CD14-positive monocyte (primary cell): ENCODE measurements at regions of chr15 and their contacts with region 1.

Region 1: DNA sequence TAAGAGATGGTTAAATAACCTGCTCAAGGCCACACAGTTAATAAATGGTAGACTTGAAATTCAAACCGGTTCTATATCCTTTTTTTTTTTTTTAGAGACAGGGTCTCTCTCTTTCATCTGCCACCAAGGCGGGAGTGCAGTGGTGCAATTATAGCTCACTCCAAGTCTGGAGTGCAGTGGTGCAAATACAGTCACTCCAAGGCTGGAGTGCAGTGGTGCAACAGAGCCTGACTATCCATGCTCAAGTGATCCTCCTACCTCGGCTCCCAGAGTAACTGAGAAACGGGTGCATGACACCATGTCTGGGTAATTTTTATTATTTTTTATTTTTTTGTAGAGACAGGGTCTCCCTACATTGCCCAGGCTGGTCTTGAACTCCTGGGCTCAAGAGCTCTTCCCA is 23.4 kb downstream of the DPP8 start:
- DNase-seq: no peak
- H3K4me3 ChIP-seq: no peak overlapping the region
- H3K4me3 Mint-ChIP-seq: no peak overlapping the region
- H3K27ac ChIP-seq: no peak overlapping the region
- H3K27ac Mint-ChIP-seq: no peak overlapping the region
- H3K4me1 ChIP-seq: no peaks in the 10 kb centered on the region
- H3K4me1 Mint-ChIP-seq: no peaks in the 10 kb centered on the region
- H3K27me3 ChIP-seq: no peaks in the 10 kb centered on the region
- H3K27me3 Mint-ChIP-seq: peaks cover 0 to 2% (median 0%) of the 10 kb centered on the region in 3 donors
- CTCF ChIP-seq: no peak

Region 2: DNA sequence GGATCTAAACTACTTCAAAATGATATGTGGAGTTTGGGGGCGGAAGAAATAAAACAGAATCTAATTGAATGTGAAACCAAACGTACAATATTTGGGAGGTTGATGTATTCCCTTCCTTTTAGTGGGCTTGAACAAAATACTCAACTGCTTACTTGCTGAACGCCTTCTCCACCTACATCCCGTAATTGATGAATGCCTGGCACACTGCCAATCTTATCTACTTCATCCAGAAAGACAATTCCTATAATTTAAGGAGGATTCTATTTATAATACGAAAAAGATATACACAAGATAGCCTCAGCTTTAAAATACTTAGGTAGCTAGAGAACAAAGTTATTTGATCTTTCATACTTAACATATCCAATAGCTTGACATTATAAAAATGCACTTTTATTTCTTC is 337.4 kb before region 1 on chr15:
- intact Hi-C with region 1: loop called in 1 of 2 experiments (anchors 10 kb)
- DNase-seq: no peak
- H3K4me3 ChIP-seq: no peak overlapping the region
- H3K4me3 Mint-ChIP-seq: no peak overlapping the region
- H3K27ac ChIP-seq: no peak overlapping the region
- H3K27ac Mint-ChIP-seq: no peak overlapping the region
- H3K4me1 ChIP-seq: no peaks in the 10 kb centered on the region
- H3K4me1 Mint-ChIP-seq: no peaks in the 10 kb centered on the region
- H3K27me3 ChIP-seq: no peaks in the 10 kb centered on the region
- H3K27me3 Mint-ChIP-seq: no peaks in the 10 kb centered on the region
- CTCF ChIP-seq: no peak

Region 3: DNA sequence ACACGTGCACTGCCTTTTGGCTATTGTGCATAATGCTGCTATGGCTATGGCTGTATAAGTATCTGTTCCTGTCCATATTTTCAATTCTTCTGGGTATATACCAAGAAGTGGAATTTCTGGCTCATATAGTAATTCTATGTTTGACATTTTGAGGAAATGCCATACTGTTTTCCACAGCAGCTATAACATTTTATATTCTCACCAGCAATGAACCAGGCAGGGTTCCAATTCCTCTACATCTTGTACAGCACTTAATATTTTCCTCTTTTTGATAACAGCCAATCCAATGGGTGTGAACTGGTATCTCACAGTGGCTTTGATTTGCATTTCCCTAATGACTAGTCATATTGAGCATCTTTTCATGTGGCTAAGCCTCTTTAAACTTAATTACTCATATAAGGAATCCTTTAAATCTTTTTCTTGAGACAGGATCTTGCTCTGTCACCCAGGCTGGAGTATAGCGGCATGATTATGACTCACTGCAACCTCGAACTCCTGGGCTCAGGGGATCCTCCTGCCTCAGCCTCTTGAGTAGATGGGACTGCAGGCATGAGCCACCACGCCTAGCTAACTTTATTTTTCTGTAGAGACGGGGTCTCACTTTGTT is 33.2 kb before region 1 on chr15:
- intact Hi-C with region 1: no loop called
- DNase-seq: no peak
- H3K4me3 ChIP-seq: no peak overlapping the region
- H3K4me3 Mint-ChIP-seq: no peak overlapping the region
- H3K27ac ChIP-seq: no peak overlapping the region
- H3K27ac Mint-ChIP-seq: peak overlapping the region in 3 of 7 donors; percentile 27 to 59 (median 56)
- H3K4me1 ChIP-seq: no peaks in the 10 kb centered on the region
- H3K4me1 Mint-ChIP-seq: peaks cover 2% of the 10 kb centered on the region
- H3K27me3 ChIP-seq: no peaks in the 10 kb centered on the region
- H3K27me3 Mint-ChIP-seq: no peaks in the 10 kb centered on the region
- CTCF ChIP-seq: no peak